ENCODE measurements at regions of chr7 and their contacts with region 1.

Region 1: GRCh38 chr7:16114633-16115032 is 306.7 kb downstream of the CRPPA start:
- DNase-seq: peak; percentile 52
- ATAC-seq: peak; percentile 59; the same call in 1 of the 2 replicates
- H3K4me3 ChIP-seq: no peak overlapping the region
- H3K27ac ChIP-seq: no peak overlapping the region
- H3K4me1 ChIP-seq: no peaks in the 10 kb centered on the region
- H3K27me3 ChIP-seq: no peaks in the 10 kb centered on the region
- CTCF ChIP-seq: peak; percentile 24 to 54 (median 54); a peak in 4 of 6 replicates
- POLR2A ChIP-seq: no peak
- RAD21 ChIP-seq: peak; percentile 88

Region 2: GRCh38 chr7:15747301-15747700 is 367.3 kb before region 1 on chr7:
- CTCF ChIA-PET with region 1: no interaction called
- POLR2A ChIA-PET with region 1: no interaction called
- RAD21 ChIA-PET with region 1: no interaction called
- intact Hi-C with region 1: no loop called
- DNase-seq: no peak
- ATAC-seq: no peak
- H3K4me3 ChIP-seq: no peak overlapping the region
- H3K27ac ChIP-seq: no peak overlapping the region
- H3K4me1 ChIP-seq: no peaks in the 10 kb centered on the region
- H3K27me3 ChIP-seq: no peaks in the 10 kb centered on the region
- CTCF ChIP-seq: no peak
- POLR2A ChIP-seq: no peak
- RAD21 ChIP-seq: no peak

Region 3: DNA sequence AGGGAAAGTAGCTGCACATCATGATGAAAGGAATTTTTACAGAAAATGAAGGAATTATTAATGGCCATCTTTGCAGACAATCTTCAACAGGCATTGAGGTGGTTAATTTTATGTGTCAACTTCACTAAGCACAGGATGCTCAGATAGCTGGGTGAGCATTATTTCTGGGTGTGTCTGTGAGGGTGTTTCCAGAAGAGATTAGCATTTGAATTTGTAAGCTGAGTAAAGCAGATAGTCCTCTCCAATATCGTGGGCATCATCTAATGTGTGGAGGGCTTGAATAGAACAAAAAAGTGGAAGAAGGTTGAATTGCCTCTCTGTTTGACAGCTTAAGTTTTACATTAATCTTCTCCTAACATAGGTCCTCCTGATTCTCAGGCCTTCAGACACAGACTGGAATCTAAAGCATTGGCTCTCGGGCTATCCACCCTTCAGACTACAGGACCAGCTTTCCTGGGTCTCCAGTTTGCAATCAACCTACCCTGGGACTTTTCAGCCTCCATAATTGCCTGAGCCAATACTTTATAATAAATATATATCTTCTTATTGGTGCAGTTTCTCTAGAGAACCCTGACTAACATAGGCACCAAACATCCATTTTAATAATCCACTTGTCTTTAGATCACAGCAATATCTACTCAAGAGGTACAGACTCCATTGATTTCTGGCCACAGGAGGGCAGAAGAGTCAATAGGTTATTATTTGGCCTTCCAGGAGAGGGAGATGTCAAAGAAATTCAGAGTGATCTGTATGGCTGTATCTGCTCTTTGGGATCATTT is 317.2 kb after region 1 on chr7:
- CTCF ChIA-PET with region 1: no interaction called
- POLR2A ChIA-PET with region 1: no interaction called
- RAD21 ChIA-PET with region 1: no interaction called
- intact Hi-C with region 1: loop called (anchors 2 kb)
- DNase-seq: peak; percentile 54
- ATAC-seq: peak; percentile 96
- H3K4me3 ChIP-seq: no peak overlapping the region
- H3K27ac ChIP-seq: no peak overlapping the region
- H3K4me1 ChIP-seq: peaks cover 0 to 6% of the 10 kb centered on the region in 2 experiments; a peak in 2 of 4 replicates
- H3K27me3 ChIP-seq: no peaks in the 10 kb centered on the region
- CTCF ChIP-seq: peak; percentile 51 to 86 (median 72)
- POLR2A ChIP-seq: no peak
- RAD21 ChIP-seq: peak; percentile 79

Measured in HCT116 (cell line).